SK-N-SH (cell line): ENCODE measurements at regions of chr22 and their contacts with region 1.

Region 1: DNA sequence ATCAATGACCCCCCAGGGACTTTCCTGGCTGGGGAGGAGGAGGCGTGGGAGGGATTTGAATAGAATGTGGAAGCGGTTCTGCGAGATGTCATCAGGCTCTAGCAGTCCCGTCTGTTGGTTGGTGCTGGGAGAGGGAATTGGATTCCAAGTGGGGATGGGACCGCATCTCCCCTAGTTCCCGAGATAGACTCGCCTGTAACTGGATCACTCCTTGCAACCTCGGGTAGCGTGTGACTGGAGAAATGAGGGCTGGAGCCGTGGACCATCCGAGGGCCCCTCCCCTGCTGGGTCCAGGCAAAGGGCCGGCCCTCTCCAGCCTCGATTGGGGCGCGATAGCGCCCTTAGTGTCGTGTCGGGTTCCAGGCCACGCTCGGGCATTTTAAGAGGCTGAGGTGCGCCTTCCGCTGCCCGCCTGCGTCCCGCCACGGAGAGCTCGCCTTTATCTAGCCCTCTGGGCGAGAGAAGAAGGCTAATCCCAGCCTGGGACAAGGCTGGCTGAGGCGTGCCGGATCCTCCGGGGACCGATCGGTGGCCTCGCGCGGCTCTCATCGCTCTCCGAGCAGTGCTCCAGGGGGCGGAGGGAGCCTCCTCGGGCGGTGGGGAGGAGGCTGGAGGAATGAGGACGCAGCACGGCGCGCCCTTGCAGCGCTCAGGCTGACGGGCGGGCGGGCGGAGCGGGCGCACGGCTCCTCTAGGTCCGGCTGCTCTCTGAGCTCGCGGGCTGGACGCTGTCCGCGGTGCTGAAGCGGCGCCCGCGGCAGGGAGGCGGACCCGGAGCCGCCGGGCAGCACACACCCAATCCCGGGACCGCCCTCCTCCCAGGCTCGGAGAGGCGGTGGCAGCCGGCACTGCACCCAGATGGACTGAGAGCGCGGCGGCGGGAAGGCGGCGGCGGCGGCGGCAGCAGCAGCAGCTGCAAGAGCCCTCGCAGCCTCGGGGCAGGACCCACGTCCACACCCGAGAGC is 107.8 kb downstream of the OSBP2 start:
- DNase-seq: peak; percentile 90
- H3K4me3 ChIP-seq: peak overlapping the region; percentile 43 to 61
- H3K27ac ChIP-seq: no peak overlapping the region
- H3K4me1 ChIP-seq: peaks cover 8 to 13% of the 10 kb centered on the region in 2 experiments; a peak in 2 of 4 replicates
- H3K27me3 ChIP-seq: 0 out of 2 replicates have a peak, but pooled peaks cover 6% of the 10 kb centered on the region
- CTCF ChIP-seq: no peak; the same call in 1 of the 2 replicates
- EP300 ChIP-seq: no peak
- RAD21 ChIP-seq: no peak

Region 2: DNA sequence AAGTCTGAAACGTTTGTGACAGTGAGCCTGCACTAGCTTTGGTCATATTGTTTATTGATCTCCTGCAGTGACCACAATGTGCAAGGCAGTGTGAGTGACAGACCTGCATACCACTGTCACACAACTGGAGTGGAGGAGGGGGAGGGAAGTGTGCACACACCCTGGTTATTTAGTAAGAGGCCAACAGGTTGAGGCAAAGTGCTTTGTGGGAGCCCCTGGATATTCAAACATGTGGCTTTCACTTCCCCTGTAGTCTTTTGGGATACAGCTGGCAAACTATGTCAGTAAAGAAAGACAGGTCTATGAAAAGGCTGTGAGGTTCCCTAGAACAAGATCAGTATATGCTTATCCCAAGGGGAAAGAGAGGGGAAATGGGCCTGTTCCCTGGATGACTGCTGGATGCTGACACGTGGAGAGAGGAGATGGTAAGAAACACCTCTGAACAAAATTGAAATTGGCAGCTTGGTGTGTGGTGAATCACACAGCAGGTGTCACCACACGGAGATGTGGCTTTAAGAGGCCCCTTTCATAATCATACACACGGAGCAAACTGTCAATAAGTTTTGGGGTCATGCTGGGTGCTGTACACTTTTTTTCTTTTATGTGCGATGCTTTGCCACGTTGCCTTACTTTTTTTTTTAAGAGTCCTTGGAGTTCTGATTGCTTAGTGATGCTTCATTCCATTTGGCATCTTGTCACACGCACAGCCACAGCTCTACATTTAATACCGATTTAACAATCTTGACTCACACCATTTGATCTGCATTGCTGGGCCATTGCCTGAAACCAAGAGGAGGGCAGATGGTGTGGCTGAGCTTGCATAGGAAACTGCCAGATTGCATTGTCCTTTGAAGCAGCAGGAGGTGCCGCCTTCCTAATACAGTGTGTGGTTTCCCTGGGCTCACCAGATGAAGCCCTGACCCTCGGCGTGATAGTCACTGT is 96.5 kb before region 1 on chr22:
- CTCF ChIA-PET with region 1: no interaction called
- POLR2A ChIA-PET with region 1: no interaction called
- DNase-seq: no peak
- H3K4me3 ChIP-seq: no peak overlapping the region
- H3K27ac ChIP-seq: no peak overlapping the region
- H3K4me1 ChIP-seq: peaks cover 7 to 9% of the 10 kb centered on the region in 2 experiments; a peak in 2 of 4 replicates
- H3K27me3 ChIP-seq: no peaks in the 10 kb centered on the region
- CTCF ChIP-seq: no peak
- EP300 ChIP-seq: no peak
- RAD21 ChIP-seq: no peak

Region 3: GRCh38 chr22:30792456-30792855 is 10.0 kb before region 1 on chr22:
- CTCF ChIA-PET with region 1: interaction called, 10 read pairs
- POLR2A ChIA-PET with region 1: interaction called, 3 read pairs
- DNase-seq: no peak
- H3K4me3 ChIP-seq: no peak overlapping the region
- H3K27ac ChIP-seq: no peak overlapping the region
- H3K4me1 ChIP-seq: peaks cover 0 to 4% of the 10 kb centered on the region in 2 experiments; a peak in 1 of 4 replicates
- H3K27me3 ChIP-seq: no peaks in the 10 kb centered on the region
- CTCF ChIP-seq: no peak
- EP300 ChIP-seq: no peak
- RAD21 ChIP-seq: no peak